ENCODE measurements at regions of chr7 and their contacts with region 1.

Region 1: DNA sequence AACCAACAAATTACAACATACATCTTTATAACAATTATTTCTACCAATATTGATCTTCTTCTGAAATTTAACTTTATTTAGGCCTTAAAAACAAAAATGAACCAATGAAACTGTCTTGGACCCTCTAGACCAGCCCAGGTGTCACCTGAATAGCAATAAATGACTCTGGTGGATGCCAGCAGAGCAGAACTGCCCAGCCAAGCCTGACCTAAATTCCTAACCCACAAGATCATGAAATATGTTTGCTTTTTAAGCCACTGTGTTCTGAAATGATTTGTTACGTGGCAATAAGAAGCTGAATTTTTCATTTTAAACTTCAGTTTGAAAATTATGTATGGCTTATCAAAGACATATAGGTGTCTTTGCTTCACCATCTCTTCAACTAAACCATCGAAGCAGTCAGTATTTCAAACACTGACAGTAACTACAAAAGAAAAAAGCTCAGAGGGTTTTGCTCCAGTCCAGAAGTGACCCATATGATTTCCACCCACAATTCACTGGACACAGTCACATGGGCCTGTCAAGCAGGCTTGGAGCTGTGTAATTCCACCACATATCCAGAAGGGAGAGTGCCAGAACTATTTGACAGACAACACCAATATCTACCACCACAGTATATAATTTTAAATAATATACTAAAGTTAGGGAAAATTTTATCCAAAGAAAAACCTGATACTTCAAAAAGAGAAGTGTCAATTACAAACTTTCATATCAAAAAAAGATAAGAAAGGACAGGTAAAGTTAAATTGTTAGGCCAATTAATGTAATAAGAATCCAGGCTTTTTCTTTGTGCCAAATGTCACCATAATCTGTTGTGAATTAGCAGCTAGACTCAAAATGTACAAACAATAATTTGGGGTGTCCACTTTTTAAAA is 94.5 kb downstream of the KMT2C start:
- DNase-seq: no peak
- H3K4me3 ChIP-seq: no peak overlapping the region
- H3K27ac ChIP-seq: peak overlapping the region in 1 of 2 donors; percentile 20
- H3K4me1 ChIP-seq: peaks cover 0 to 16% of the 10 kb centered on the region in 2 donors
- H3K27me3 ChIP-seq: no peaks in the 10 kb centered on the region
- CTCF ChIP-seq: peak in 2 of 3 experiments; percentile 48 to 52

Region 2: GRCh38 chr7:152419473-152420429 is 78.5 kb after region 1 on chr7:
- intact Hi-C with region 1: no loop called
- DNase-seq: no peak
- H3K4me3 ChIP-seq: no peak overlapping the region
- H3K27ac ChIP-seq: no peak overlapping the region
- H3K4me1 ChIP-seq: peaks cover 0 to 3% of the 10 kb centered on the region in 2 donors
- H3K27me3 ChIP-seq: no peaks in the 10 kb centered on the region
- CTCF ChIP-seq: no peak

Region 3: DNA sequence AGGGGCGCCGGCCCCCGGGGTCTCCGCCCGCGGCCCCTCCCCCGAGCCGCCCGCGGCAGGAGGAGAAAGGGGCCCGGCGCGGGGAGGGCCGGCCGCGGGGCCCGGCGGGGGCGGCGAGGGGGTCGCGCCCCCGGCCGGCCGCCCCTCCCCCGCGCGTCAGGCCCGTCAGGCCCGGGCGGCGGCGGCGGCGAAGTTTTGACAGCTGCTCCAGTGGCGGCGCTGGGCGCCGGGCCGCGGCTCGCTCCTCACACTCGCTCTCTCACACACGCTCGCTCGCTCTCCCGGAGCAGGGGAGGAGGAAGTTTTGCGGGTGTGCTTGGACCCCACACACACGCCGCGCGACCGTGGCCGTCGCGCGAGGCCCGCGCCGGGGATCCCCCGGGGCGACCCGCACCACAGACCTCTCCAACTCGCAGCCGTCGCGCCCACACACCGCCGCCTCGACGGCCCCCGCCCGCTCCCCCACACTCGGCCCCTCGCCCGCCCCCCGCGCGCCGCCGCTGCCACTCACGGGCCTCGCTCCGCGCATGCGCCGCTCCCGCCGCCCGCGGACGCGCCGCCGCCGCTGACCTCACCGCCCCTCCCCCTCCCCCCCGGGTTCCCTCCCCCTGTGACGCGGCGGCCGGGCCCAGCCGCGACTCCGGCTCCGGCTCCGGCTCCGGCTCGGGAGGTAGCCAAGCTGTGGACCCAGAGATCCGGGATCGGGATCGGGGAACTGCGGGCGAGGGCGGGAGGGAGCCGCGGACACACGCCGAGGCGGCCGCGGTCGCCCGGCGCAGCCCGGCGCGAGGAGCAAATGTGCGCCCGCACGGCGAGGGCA is 95.0 kb after region 1 on chr7:
- intact Hi-C with region 1: loop called (anchors 5 kb)
- DNase-seq: peak; percentile 73 to 96
- H3K4me3 ChIP-seq: peak overlapping the region; percentile 88 to 91
- H3K27ac ChIP-seq: peak overlapping the region; percentile 93 to 100
- H3K4me1 ChIP-seq: peaks cover 2 to 18% of the 10 kb centered on the region in 2 donors
- H3K27me3 ChIP-seq: no peaks in the 10 kb centered on the region
- CTCF ChIP-seq: no peak

Region 4: DNA sequence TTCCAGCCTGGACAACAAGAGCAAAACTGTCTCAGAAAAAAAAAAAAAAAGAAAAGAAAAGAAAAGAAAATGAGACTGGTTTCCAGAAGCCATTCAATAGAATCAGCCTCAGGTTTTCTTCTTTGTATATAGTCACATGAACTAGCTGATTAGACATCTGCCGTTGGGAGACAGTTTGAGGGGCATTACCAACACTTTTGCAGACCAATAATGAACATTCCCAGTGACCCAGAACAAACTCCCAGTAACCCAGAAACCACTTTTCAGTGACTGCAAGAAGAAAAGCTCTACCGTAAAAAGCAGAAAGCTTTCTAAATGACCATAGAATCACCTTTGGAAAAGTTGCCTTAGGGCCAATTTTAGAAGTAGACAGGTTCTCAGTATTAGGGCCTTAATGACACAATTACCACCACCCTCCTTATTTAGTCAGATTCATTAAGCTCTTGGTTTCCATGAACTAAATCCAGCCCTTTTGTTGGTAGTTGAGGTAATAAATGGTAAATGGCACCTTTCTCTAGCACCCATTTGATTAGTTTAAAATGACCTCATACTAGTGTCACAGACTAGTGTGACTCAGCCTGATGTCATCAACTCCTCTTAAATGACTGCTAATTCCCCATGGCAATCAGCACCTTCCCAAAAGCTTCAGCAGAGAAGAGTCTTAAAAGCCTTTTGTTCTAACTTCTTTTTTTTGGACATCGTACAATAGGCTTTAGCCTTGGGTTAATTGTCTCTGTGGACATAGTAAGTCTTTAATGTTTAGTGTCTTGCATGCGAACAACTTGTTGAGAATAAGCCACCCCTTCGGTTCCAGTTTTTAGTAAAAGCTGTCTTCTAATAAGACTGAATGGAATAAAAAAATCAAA is 368.2 kb after region 1 on chr7:
- intact Hi-C with region 1: loop called (anchors 5 kb)
- DNase-seq: no peak
- H3K4me3 ChIP-seq: no peak overlapping the region
- H3K27ac ChIP-seq: no peak overlapping the region
- H3K4me1 ChIP-seq: no peaks in the 10 kb centered on the region
- H3K27me3 ChIP-seq: peaks cover 3% of the 10 kb centered on the region
- CTCF ChIP-seq: no peak